ENCODE measurements at regions of chr11 and their contacts with region 1.

Region 1: DNA sequence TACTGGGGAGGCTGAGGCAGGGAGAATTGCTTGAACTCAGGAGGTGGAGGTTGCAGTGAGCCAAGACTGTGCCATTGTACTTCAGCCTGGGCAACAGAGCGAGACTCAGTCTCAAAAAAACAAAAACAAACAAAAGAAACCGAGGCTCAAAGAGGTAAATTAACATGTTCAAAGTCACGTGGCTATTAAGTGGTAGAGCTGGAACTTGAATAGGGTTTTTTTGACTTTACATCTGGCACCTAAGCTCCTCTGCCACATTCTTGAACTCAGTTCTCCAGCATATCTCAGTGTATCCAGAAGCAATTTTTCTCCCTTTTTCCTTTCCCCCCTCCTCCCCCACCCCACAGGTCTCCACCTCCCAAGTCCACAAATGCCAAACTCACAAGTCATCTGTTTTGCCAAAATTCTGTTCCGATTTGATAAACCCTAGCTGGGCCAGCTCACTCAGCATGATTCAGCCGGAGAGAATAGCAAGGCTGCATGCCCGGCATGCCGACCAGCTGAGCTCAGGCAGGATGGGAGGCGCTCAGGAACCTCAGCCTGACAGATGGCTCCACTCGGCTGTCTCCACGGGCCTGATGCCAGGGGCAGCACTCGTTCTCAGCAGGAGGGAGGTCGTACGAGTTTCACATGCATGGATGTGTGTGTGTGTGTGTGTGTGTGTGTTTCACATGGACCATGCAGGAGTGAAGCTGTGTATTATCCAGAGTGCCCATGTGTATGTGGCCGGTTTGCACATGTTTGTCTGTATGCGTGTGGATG is 63.2 kb upstream of the RRAS2 start:
- DNase-seq: peak; percentile 83 to 94 (median 90)
- ATAC-seq: peak; percentile 95 to 99 (median 98)
- H3K4me3 ChIP-seq: no peak overlapping the region
- H3K27ac ChIP-seq: peak overlapping the region; percentile 22 to 91 (median 60)
- H3K4me1 ChIP-seq: peaks cover 0 to 42% (median 21%) of the 10 kb centered on the region in 12 donors
- H3K27me3 ChIP-seq: no peaks in the 10 kb centered on the region
- CTCF ChIP-seq: no peak
- POLR2A ChIP-seq: no peak

Region 2: DNA sequence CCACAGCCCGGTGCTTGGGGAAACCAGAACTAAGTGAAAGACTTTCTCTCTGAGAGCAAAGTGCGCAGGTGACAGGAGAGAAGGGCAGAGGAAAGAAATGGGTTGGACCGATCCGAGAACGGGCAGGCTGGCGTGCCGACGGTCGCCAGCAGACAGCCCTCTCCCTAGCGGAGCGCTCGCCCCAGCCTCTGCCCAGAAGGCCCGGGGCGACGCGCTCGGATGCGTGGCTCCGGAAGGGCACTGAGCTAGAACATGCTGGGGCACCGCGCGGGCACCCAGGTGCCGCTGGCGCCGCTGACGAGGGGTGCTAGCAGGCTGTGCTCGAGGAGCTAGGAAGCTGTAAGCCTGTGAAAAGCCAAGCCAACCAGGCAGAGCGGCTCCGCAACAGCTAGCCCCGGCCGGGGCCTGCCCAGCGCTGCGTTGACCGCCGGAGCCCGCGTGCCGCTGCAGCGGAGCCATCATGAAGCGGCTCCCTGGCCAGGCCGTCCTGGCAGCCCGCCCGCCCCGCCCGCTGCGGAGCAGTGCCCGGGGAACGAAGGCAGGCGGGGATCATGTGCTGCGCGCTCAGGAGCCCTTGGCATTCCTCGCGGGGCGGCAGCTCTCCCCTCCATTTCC is 41.2 kb before region 1 on chr11:
- intact Hi-C with region 1: loop called in 3 of 10 experiments (anchors 5 kb)
- DNase-seq: peak; percentile 74 to 86 (median 79)
- ATAC-seq: peak; percentile 86 to 97 (median 94)
- H3K4me3 ChIP-seq: peak overlapping the region; percentile 15 to 67 (median 54)
- H3K27ac ChIP-seq: peak overlapping the region; percentile 42 to 94 (median 86)
- H3K4me1 ChIP-seq: peaks cover 0 to 25% (median 8%) of the 10 kb centered on the region in 12 donors
- H3K27me3 ChIP-seq: peaks cover 0 to 23% (median 0%) of the 10 kb centered on the region in 9 donors
- CTCF ChIP-seq: peak in 2 of 12 donors; percentile 10 to 20
- POLR2A ChIP-seq: no peak

Region 3: GRCh38 chr11:14386895-14387480 is 35.2 kb before region 1 on chr11:
- intact Hi-C with region 1: loop called in 3 of 10 experiments (anchors 5 kb)
- DNase-seq: peak in 4 of 5 donors; percentile 32 to 45 (median 38)
- ATAC-seq: peak; percentile 62 to 84 (median 76)
- H3K4me3 ChIP-seq: no peak overlapping the region
- H3K27ac ChIP-seq: no peak overlapping the region
- H3K4me1 ChIP-seq: peaks cover 0 to 17% (median 1%) of the 10 kb centered on the region in 12 donors
- H3K27me3 ChIP-seq: no peaks in the 10 kb centered on the region
- CTCF ChIP-seq: no peak
- POLR2A ChIP-seq: no peak